ENCODE measurements at regions of chr3 and their contacts with region 1.

Region 1: DNA sequence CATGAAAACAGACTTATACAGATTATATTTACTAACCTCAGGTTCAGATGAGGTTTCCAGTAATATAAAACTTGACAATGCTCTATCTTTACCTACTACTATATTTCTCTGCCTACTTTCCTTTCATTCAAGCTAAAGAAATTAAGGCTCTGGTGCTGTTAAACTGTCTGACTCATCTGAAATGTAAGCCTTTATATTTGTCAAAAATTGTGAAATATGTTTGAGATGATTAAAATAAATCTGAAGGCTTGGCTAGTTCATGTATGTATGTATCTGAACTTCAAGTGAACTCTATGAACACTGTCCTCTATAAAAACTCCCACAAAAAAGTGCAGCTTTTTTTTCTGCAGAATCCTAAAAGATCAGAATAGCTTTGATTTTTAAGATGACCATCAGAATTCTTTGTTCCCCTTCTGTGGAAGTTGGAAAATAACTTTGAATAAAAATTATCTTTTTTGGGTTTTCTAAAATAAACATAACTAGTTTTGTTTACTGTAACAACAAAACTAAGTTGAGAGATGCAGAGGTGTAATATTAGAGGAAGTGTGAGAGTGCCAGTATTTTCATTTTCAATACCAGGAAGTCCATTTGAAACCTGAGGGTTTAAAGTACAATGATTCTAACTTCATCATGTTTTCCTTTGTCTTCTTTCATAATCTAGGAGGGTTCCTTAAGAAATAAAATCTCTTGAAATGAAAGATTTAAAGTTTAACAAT is 42.2 kb downstream of the ILDR1 start:
- DNase-seq: no peak
- ATAC-seq: no peak
- H3K4me3 Mint-ChIP-seq: no peak overlapping the region
- H3K27ac Mint-ChIP-seq: peak overlapping the region; percentile 24
- H3K4me1 Mint-ChIP-seq: peaks cover 27% of the 10 kb centered on the region
- H3K27me3 Mint-ChIP-seq: no peaks in the 10 kb centered on the region
- CTCF ChIP-seq: no peak

Region 2: GRCh38 chr3:121749276-121750086 is 230.4 kb before region 1 on chr3 and contains the start of gene GOLGB1:
- CTCF ChIA-PET with region 1: no interaction called
- POLR2A ChIA-PET with region 1: no interaction called
- intact Hi-C with region 1: no loop called
- DNase-seq: peak; percentile 81
- ATAC-seq: peak; percentile 93
- H3K4me3 Mint-ChIP-seq: no peak within 1 kb of the TSS
- H3K27ac Mint-ChIP-seq: no peak within 1 kb of the TSS
- H3K4me1 Mint-ChIP-seq: peaks cover 4% of the 10 kb centered on the region
- H3K27me3 Mint-ChIP-seq: no peaks in the 10 kb centered on the region
- CTCF ChIP-seq: no peak
- total RNA-seq, gene GOLGB1: 37.3 and 44.7 TPM in 2 replicates

Region 3: DNA sequence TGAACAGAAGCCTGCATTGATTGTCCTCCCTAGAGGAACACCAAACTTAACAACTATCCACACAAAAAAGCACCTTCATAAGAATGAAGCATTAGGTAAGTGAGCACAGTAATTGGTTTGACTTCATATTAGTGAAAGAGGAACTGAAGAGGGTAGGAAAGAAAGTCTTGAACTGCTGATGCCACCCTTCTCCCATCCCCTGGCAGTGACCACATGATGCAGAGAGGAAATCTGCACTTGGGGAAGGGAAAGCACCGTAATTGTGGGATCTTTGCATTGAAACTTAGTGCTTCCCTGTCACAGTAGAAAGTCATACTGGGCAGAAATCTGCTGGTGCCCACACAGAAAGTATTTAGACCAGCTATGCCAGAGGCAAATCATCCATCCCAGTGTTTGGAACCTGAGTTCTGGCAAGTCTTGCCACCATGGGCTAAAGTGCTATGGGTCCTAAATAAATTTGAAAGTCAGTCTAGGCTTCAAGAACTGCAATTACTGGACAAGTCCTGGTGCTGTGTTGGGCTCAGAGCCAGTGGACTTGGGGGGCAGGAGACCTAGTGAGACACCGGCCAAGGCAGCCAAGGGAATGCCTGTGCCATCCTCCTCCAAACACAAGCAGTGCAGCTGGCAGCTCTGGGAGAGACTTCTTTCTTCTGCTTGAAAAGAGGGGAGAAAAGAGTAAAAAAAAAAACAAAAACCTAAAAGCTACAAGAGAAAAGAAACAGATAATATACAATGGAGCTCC is 22.0 kb before region 1 on chr3:
- CTCF ChIA-PET with region 1: no interaction called
- POLR2A ChIA-PET with region 1: no interaction called
- intact Hi-C with region 1: loop called (anchors 2 kb)
- DNase-seq: no peak
- ATAC-seq: peak; percentile 58
- H3K4me3 Mint-ChIP-seq: no peak overlapping the region
- H3K27ac Mint-ChIP-seq: peak overlapping the region; percentile 59
- H3K4me1 Mint-ChIP-seq: peaks cover 29% of the 10 kb centered on the region
- H3K27me3 Mint-ChIP-seq: no peaks in the 10 kb centered on the region
- CTCF ChIP-seq: no peak

Region 4: DNA sequence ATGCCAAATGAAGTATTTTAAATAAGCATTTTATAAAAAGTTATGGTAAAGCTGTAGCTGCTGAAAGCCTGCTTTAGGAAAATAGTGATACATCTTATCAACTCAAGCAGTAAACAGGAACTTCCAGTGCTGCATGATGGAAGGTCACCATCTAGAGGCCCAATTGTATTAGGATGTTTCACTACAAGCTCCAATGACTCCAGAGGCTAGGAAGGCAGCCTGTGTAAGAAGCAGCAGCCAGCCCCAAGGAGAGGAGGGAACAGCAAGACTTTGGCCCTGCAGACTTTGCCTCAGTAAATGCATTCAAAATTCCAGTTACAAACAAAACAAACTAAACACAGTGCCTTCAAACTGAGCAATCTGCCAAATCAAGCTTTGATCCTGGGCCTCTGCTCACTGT is 10.1 kb after region 1 on chr3:
- CTCF ChIA-PET with region 1: no interaction called
- POLR2A ChIA-PET with region 1: no interaction called
- intact Hi-C with region 1: loop called (anchors 1 kb)
- DNase-seq: no peak
- ATAC-seq: no peak
- H3K4me3 Mint-ChIP-seq: no peak overlapping the region
- H3K27ac Mint-ChIP-seq: no peak overlapping the region
- H3K4me1 Mint-ChIP-seq: peaks cover 66% of the 10 kb centered on the region
- H3K27me3 Mint-ChIP-seq: no peaks in the 10 kb centered on the region
- CTCF ChIP-seq: no peak

Measured in activated B cell treated with CpG ODN at 0.5 μM for 24 hours (primary cell).